ENCODE measurements at regions of chr1 and their contacts with region 1.

Region 1: DNA sequence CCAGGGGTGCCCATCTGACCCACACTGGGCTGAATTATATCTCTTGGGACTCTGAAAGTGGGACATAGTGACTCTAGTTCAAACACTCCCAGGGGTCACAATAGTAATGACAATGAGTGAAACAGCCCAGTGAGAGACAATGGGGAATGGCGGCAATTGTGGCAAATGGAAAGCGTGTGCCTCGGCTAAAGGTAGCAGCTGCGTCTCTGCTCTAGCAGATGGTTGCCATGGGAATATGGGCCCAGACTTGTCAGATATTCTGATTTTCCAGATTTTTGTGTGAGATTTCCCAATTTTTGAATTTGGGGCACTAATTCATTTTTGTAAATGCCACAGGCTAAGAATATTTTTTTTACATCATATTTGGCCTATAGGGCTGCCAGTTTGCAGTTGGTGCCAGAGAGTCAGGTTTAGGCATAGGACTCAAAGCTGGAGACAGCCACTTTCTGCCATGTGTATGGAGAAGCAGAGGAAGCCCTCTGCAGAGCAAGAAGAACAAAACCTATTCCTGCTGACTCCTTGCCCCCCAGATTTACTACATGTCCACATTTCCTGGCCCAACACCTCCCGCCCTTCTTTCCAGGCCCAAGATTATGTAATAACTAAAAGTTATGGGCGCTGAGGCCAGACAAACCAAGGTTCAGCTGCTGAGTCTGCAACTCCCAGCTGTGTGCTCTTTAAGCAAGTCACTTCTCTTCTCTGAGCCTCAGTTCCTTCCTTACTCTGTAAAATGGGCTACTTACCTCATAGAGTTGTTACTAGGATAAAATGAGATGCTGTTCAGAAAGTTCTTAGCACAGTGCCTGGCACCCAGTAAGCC is 21.6 kb upstream of the PTP4A2 start:
- DNase-seq: no peak
- H3K4me3 ChIP-seq: no peak overlapping the region
- H3K27ac ChIP-seq: no peak overlapping the region
- H3K27me3 ChIP-seq: no peaks in the 10 kb centered on the region
- CTCF ChIP-seq: no peak

Region 2: GRCh38 chr1:31663622-31664452 is 295.9 kb before region 1 on chr1:
- intact Hi-C with region 1: loop called (anchors 10 kb)
- DNase-seq: peak in 9 of 10 donors; percentile 39 to 83 (median 69)
- H3K4me3 ChIP-seq: no peak overlapping the region
- H3K27ac ChIP-seq: peak overlapping the region in 1 of 59 donors; percentile 18
- H3K27me3 ChIP-seq: no peaks in the 10 kb centered on the region
- CTCF ChIP-seq: peak; percentile 68 to 96 (median 88)

Region 3: DNA sequence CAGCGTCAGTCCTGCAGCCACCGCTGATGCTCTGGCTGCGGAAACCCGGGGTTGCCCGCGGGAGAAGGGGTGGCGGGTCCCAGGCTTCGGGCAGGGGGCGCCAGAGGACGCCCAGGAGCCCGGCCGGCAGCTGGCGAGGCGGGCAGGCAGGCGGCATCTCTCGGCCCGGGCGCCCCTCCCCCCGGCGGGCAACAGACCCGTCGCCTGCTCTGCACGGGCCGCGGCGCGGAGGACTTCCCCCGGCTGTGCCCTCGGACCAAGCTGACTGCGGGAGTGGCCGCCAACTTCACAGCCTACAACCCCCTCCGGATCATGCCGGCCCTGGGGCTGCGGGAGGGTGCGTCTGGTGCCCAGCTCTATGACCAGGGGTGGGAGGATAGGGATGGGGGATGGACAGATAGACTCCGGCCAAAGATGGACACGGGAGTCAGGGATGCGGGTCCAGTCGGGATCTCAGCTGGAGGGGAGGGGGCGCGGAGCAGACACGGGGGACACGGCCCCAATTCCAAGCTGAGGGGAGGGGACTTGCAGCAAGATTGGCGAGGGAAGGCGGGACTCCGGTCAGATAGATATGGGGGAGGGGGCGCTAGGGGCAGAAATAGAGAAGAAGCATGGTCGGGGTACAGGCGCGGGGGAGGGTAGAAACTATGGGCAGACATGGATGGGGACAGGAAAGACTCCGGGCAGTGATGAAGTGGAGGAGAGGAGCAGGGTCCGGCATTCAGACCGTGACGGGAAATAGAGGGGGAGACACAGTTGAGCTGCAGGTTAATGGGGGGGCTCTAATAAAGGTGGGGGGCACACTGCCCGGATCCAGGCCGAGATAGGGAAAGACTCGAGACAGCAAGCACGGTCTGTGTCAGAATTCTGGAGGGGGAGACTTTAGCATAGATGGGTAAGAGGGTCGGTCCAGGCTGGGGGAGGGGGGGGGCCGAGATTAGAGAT is 196.7 kb before region 1 on chr1:
- intact Hi-C with region 1: loop called (anchors 1 to 5 kb)
- DNase-seq: peak; percentile 68 to 89 (median 80)
- H3K4me3 ChIP-seq: peak overlapping the region; percentile 48 to 95 (median 73)
- H3K27ac ChIP-seq: peak overlapping the region in 48 of 59 donors; percentile 0 to 88 (median 70)
- H3K27me3 ChIP-seq: no peaks in the 10 kb centered on the region
- CTCF ChIP-seq: peak; percentile 47 to 90 (median 78)

Region 4: GRCh38 chr1:31938174-31938950 is 21.4 kb before region 1 on chr1 and contains the start of gene PTP4A2:
- intact Hi-C with region 1: no loop called
- DNase-seq: peak; percentile 81 to 94 (median 90)
- H3K4me3 ChIP-seq: peak within 1 kb of the TSS; percentile 51 to 91 (median 76)
- H3K27ac ChIP-seq: peak within 1 kb of the TSS; percentile 78 to 98 (median 91)
- H3K27me3 ChIP-seq: no peaks in the 10 kb centered on the region
- CTCF ChIP-seq: peak in 44 of 56 donors; percentile 7 to 82 (median 51)
- total RNA-seq, gene PTP4A2: 185 to 784 (median 393) TPM

Region 5: DNA sequence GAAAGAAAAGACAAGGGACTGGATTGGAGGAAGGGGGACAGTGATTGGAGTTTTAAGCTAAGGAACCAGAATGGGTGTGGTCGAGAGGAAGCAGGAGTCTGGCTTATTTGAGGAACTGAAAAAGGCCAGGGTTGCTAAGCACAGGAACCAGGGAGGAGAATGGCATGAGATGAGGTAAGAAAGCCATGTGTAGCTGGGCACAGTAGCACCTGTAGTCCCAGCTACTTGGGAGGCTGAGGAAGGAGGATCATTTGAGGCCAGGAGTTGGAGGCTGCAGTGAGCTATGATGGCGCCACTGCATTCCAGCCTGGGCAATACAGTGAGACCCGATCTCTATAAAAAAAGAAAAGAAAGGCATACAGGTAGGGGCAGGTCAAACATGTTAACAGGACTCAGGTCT is 45.8 kb after region 1 on chr1:
- intact Hi-C with region 1: loop called in 1 of 2 experiments (anchors 5 kb)
- DNase-seq: no peak
- H3K4me3 ChIP-seq: no peak overlapping the region
- H3K27ac ChIP-seq: no peak overlapping the region
- H3K27me3 ChIP-seq: no peaks in the 10 kb centered on the region
- CTCF ChIP-seq: no peak